Sciatic nerve (tissue), 2 donors: ENCODE measurements at regions of chr14 and their contacts with region 1.

Region 1: DNA sequence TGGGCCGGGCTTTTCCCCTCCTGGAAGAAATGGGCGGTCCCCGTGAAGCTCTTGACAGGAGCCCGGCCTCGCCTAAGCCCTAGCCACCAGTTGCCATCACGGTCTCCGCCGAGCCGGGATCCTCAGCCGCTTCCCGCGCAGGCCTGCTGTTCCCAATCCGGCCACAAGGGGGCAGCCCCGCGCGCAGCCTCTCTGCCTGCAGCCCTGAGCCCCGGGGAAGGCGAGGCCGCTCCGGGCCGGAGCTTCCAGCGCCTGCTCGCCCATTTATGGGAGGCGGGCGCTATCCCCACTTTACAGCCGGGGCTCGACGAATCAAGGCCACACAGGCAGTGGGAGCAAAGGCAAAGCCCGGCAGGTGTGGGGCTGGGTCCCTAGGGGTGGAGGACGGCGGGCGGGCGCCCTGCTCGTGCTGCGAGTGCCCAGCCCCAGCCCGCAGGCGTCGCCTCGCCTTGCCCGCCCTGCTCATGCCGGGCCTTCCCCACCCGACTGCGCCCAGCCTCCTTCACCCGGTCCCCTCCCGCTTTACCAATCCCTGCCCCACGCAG is 61.5 kb downstream of the LGMN start:
- DNase-seq: peak; percentile 89
- ATAC-seq: peak; percentile 89

Region 2: GRCh38 chr14:92553438-92553837 is 133.5 kb before region 1 on chr14:
- intact Hi-C with region 1: no loop called
- DNase-seq: no peak
- ATAC-seq: no peak

Region 3: GRCh38 chr14:92783816-92784431 is 97.0 kb after region 1 on chr14:
- intact Hi-C with region 1: loop called (anchors 5 kb)
- DNase-seq: no peak
- ATAC-seq: peak; percentile 84